Right ventricle myocardium superior (tissue), 1 donor: ENCODE measurements at regions of chr1 and their contacts with region 1.

Region 1: DNA sequence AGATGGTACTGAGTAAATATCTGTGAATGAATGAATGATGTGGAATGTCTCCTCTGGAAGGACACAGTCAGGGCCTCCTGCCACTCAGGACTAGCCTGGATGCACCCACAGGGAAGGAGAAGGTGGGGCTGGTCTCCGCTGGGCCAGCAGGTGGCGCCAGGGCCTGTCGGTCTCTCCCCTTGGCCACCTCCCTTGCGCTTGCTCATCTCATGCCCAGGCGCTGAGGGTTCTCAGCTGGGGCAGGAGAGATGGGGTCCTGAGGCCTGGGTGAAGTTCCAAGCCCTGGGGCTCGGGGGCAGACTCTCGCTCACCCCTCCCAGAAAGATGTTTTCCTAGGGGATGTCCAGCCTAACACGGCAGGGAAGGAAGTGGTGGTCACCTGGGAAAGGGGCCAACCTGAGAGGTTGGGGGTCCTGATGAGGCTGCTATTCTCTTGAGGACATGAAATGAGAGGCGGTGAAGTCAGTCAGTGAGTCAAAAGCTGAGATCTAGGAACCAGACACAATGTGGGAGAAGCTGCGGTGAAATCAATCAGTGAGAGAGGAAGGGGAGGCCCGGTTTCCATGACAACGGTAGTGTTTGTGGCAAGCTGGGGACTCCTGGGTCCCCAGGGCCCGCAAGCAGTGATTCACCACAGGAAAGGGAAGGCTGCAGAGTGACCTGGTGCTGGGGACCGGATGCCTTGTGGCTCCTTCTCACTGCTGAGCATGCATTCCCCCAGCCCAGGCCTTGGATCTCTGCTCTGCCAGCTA is 14.6 kb upstream of the MEX3A start:
- DNase-seq: peak; percentile 95
- ATAC-seq: peak; percentile 98

Region 2: GRCh38 chr1:155873860-155874259 is 223.0 kb before region 1 on chr1:
- intact Hi-C with region 1: no loop called
- DNase-seq: no peak
- ATAC-seq: no peak

Region 3: DNA sequence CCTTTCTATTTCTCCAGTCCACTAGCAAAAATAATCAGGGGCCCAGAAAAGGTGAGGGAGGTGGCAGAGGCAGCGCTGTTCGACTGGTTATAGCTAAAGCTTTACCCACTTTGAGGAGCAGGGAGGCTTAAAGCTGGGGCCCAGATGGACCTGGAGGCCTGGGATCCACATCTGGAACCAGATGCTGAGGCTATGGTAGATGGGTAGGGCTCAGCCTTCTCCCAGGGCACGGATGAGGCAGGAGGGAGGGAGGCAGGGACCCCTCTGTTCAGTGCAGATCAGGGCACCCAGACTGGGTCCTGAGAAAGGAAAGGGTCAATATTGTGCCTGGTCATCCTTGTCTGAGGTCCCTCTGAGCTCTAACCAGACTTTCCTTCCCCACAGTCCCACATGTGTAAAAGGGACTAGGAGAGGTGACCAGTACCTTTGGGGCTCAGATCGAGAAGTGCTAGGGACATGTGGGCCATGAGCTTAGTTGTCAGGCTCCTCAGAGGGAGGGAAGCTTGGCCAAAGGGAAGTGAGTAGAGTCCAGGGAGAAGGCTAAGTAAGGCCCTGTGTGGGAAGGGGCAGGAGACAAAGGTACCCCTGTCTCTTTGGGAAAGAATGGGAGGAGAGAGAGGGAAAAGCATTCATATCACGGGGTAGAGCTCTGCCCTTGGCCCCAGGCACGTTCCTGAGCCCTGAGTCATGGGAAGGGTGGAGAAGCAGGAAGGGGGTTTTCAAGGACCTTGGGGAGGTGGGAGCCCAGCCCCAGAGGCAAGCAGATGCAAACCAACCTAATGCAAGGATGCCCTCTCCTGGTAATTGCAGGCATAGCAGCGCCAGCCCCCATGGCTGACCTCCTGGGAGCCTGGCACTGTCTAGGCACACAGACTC is 33.1 kb after region 1 on chr1:
- intact Hi-C with region 1: loop called (anchors 2 kb)
- DNase-seq: peak; percentile 87
- ATAC-seq: peak; percentile 53